Left cardiac atrium (tissue), 4 donors: ENCODE measurements at regions of chr19 and their contacts with region 1.

Region 1: GRCh38 chr19:12985049-12985776 is 10.1 kb upstream of the NFIX start:
- DNase-seq: peak; percentile 68
- ATAC-seq: peak; percentile 66 to 78

Region 2: DNA sequence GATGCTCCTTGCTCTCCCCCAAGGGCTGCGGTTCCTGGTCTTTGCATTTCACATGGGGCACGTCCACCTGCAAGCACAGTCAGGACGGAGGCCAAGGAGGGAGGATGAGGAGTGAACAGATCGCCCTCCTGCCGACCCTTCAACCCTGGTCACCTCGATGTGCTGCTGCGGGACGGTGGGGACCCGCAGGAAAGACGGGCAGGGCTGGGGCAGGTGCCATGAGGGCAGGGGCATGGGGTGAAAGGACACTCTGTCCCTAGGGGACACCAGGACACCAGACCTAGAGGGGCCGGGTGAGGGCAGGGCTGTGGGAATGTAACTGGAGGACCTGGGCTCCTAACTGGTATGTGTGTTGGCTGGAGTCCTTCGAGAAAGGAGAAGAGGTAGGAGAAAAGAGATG is 66.9 kb before region 1 on chr19:
- intact Hi-C with region 1: no loop called
- DNase-seq: no peak
- ATAC-seq: no peak

Region 3: GRCh38 chr19:12945479-12946091 is 39.6 kb before region 1 on chr19 and contains the start of gene RAD23A:
- intact Hi-C with region 1: no loop called
- DNase-seq: peak; percentile 99
- ATAC-seq: peak; percentile 93 to 97
- total RNA-seq, gene RAD23A: 113 to 131 TPM

Region 4: GRCh38 chr19:13079542-13079986 is 94.4 kb after region 1 on chr19:
- intact Hi-C with region 1: loop called in 1 of 2 experiments (anchors 5 kb)
- DNase-seq: peak; percentile 68
- ATAC-seq: peak; percentile 17 to 62